Activated CD4-positive, alpha-beta memory T cell treated with anti-CD3 and anti-CD28 coated beads for 36 hours (primary cell): ENCODE measurements at regions of chr6 and their contacts with region 1.

Region 1: GRCh38 chr6:82363351-82364086 is at the start of gene TPBG:
- DNase-seq: peak; percentile 41
- H3K4me3 Mint-ChIP-seq: peak within 1 kb of the TSS; percentile 75
- H3K27ac Mint-ChIP-seq: no peak within 1 kb of the TSS
- H3K4me1 Mint-ChIP-seq: peaks cover 16% of the 10 kb centered on the region
- H3K27me3 Mint-ChIP-seq: peaks cover 47% of the 10 kb centered on the region
- total RNA-seq, gene TPBG: 0.34 to 0.55 TPM

Region 2: GRCh38 chr6:82283771-82284410 is 79.6 kb before region 1 on chr6:
- CTCF ChIA-PET with region 1: no interaction called
- POLR2A ChIA-PET with region 1: no interaction called
- intact Hi-C with region 1: loop called (anchors 5 kb)
- DNase-seq: no peak
- H3K4me3 Mint-ChIP-seq: no peak overlapping the region
- H3K27ac Mint-ChIP-seq: no peak overlapping the region
- H3K4me1 Mint-ChIP-seq: peaks cover 31% of the 10 kb centered on the region
- H3K27me3 Mint-ChIP-seq: no peaks in the 10 kb centered on the region

Region 3: DNA sequence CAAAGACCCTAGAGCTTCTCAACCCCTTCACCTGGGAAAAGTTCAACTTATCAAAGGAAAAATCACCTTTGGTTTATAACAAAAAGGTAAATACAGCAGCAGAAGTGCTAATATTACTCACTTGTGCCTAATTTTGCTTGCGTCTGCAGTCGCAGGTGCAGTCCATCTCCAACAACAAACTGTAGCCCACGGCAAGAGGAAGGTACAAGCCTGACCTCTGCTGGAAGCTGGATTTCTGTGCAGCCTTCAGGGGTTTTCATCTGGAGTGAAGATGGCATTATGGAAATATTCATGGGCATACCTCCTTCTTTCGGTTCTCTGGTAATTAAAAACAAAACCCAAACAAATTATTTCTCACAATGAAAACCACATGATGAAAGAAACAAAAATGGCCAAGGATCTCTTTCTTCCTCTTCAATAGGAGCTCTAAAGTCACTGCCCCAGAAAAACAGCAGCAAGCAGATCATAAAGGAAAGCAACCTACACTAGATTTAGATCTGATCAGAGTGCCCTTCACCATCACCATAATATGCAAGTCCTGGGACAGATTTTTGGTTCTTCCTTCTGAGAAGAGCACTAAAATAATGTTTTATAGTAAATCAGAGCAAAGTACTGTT is 694.3 kb after region 1 on chr6:
- CTCF ChIA-PET with region 1: no interaction called
- POLR2A ChIA-PET with region 1: no interaction called
- intact Hi-C with region 1: loop called (anchors 10 kb)
- DNase-seq: peak; percentile 39
- H3K4me3 Mint-ChIP-seq: no peak overlapping the region
- H3K27ac Mint-ChIP-seq: no peak overlapping the region
- H3K4me1 Mint-ChIP-seq: peaks cover 5% of the 10 kb centered on the region
- H3K27me3 Mint-ChIP-seq: no peaks in the 10 kb centered on the region